Activated T-helper 1 cell treated with anti-CD3 and anti-CD28 coated beads, Interleukin-12 subunit alpha, Interleukin-12 subunit beta, Interleukin-2, Interleukin-4 antibody, amounts not matched to agents 30 ng/mL and 10 ng/mL and 1 ng/mL, durations not matched to agents 14 hours and 24 hours and 36 hours (primary cell): ENCODE measurements at regions of chr4 and their contacts with region 1.

Region 1: DNA sequence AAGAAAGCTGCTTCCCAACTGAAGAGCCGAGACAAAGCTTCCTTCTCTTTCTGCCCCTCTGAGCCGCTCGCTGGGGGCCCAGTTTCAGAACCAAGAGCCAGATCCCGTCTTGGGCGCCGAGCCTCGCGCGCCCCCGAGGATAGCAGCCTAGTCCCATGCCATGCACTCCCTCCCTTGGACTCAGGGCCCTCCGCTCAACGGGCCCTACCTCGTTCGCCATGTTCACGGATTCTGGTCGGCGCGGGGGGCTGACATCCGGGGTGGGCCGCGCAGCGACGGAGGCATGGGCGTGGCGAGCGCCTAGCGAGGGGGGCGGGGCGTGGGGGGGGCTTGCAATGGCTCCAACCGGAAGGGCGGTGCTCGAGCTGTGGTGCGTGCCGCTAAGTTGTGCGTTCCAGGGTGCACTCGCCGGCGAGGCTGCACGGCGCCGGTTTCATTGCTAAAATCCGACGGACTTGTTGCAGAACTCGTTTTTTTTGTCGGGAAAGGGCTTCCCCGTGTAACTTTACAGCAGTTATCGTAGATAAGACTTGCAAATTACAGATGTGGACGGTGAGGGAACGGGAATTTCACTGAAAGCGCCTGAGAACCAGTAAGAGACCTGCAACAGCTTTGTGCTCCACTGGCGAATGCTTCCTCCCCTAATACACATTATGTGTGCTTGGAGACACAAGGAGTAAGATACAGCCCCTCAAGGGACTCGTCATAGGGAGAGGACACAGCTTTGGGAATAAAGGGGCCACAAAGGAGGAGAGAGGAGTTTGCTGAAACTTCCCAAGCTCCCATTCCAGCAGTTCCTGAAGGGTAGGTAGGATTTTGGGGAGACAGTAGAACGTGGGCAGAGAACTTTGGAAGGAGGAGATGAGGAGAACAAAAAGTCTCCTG is at the start of gene ADH5:
- DNase-seq: peak; percentile 77
- H3K4me3 Mint-ChIP-seq: peak within 1 kb of the TSS; percentile 98
- H3K27ac Mint-ChIP-seq: peak within 1 kb of the TSS; percentile 98
- H3K4me1 Mint-ChIP-seq: peaks cover 50% of the 10 kb centered on the region
- H3K27me3 Mint-ChIP-seq: peaks cover 2% of the 10 kb centered on the region
- total RNA-seq, gene ADH5: 68.8 and 74.9 TPM in 2 replicates

Region 2: DNA sequence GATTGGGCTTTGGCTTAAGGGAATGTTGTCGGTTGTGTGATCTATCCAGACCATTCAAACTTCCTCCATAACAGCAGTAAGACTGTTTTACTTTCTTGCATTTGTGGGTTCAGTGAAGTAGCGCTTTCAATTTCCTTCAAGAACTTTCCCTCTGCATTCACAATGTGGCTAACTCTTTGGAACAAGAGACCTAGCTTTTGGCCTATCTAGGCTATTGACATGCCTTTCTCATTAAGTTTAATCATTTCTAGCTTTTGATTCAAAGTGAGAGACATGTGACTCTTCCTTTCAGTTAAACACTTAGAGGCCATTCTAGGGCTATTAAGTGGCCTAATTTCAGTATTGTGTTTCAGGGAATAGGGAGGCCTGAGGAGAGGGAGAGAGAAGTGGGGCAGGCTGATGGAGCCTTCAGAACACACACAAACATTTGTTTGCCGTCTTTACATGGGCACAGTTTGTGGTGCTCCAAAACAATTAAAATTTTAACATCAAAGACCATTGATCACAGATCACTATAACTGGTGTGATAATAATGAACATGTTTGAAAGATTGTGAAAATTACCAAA is 34.2 kb before region 1 on chr4:
- intact Hi-C with region 1: loop called (anchors 1 kb)
- DNase-seq: no peak
- H3K4me3 Mint-ChIP-seq: no peak overlapping the region
- H3K27ac Mint-ChIP-seq: peak overlapping the region; percentile 7
- H3K4me1 Mint-ChIP-seq: peaks cover 49% of the 10 kb centered on the region
- H3K27me3 Mint-ChIP-seq: no peaks in the 10 kb centered on the region

Region 3: DNA sequence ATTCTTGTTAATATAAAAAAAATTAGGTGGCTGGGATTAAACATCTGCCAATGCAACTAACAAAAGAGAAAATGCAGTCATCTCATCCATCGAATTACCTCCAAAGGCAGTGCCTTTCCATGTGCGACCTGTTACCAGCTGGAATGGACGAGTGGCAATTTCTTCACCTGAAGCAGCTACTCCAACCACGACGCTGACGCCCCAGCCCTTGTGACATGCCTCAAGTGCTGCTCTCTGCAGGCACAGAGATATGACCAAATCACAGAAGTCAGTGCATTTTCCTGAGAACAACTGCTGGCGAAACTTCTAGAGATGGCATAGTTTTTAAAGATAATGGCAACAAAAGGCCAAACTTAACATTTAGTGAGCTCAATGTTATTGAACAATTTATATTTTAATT is 13.9 kb before region 1 on chr4:
- intact Hi-C with region 1: loop called (anchors 1 kb)
- DNase-seq: no peak
- H3K4me3 Mint-ChIP-seq: no peak overlapping the region
- H3K27ac Mint-ChIP-seq: no peak overlapping the region
- H3K4me1 Mint-ChIP-seq: no peaks in the 10 kb centered on the region
- H3K27me3 Mint-ChIP-seq: no peaks in the 10 kb centered on the region

Region 4: DNA sequence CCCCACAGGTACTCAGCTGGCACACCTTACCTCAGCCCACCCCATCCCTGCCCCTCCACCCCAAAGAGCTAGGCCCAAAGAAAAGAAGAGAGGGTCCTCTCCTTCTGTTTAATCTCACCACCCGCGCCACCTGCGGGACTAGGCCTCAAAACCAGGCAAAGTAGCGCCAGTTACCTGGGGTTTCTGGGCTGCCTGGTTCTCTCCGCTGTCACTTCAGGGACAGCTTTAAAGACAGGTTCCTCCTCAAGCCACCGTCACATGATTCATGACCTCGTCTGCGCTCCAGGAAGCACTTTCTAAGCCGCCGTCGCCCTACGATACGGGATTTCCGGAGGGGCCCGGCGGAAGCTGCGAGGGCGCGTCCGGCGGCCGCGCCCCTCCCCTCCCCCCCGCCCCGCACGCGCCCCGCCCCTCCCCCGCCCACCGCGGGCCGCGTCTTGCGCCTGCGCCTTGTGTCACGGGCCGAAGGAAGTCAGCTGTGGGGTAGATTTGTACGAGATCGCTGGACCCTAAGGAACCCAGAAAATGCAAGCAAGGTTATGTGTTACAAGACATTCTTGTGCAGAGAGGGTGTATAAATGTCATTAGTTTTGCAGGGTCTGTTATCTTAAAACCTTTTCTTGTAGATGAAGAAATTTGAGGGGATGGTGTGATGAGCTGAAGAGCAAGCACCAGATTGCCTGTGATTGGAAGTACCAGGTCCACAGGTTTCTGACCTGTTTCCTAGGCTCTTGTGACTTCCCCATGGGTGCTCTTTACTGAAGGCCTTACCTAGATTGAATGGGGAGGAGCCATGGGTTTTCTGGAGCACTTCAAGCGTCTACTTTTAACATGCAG is 805.7 kb after region 1 on chr4 and contains the start of gene LAMTOR3:
- intact Hi-C with region 1: loop called (anchors 1 kb)
- DNase-seq: peak; percentile 87
- H3K4me3 Mint-ChIP-seq: peak within 1 kb of the TSS; percentile 97
- H3K27ac Mint-ChIP-seq: peak within 1 kb of the TSS; percentile 95
- H3K4me1 Mint-ChIP-seq: peaks cover 42% of the 10 kb centered on the region
- H3K27me3 Mint-ChIP-seq: no peaks in the 10 kb centered on the region
- total RNA-seq, gene LAMTOR3: 28.6 and 29.7 TPM in 2 replicates